Naive thymus-derived CD4-positive, alpha-beta T cell (primary cell): ENCODE measurements at regions of chr12 and their contacts with region 1.

Region 1: GRCh38 chr12:120437754-120438494 is at the start of gene COX6A1:
- DNase-seq: peak; percentile 77 to 99 (median 96)
- ATAC-seq: peak; percentile 96
- H3K4me3 ChIP-seq: peak within 1 kb of the TSS; percentile 63
- H3K4me3 Mint-ChIP-seq: peak within 1 kb of the TSS; percentile 87 to 100 (median 96)
- H3K27ac ChIP-seq: peak within 1 kb of the TSS; percentile 83
- H3K27ac Mint-ChIP-seq: peak within 1 kb of the TSS; percentile 88 to 97 (median 93)
- H3K4me1 ChIP-seq: peaks cover 15 to 20% of the 10 kb centered on the region in 2 donors
- H3K4me1 Mint-ChIP-seq: peaks cover 17 to 33% (median 30%) of the 10 kb centered on the region in 7 donors
- H3K27me3 ChIP-seq: no peaks in the 10 kb centered on the region
- H3K27me3 Mint-ChIP-seq: peaks cover 0 to 4% (median 2%) of the 10 kb centered on the region in 5 donors
- total RNA-seq, gene COX6A1: 118 to 270 (median 130) TPM

Region 2: DNA sequence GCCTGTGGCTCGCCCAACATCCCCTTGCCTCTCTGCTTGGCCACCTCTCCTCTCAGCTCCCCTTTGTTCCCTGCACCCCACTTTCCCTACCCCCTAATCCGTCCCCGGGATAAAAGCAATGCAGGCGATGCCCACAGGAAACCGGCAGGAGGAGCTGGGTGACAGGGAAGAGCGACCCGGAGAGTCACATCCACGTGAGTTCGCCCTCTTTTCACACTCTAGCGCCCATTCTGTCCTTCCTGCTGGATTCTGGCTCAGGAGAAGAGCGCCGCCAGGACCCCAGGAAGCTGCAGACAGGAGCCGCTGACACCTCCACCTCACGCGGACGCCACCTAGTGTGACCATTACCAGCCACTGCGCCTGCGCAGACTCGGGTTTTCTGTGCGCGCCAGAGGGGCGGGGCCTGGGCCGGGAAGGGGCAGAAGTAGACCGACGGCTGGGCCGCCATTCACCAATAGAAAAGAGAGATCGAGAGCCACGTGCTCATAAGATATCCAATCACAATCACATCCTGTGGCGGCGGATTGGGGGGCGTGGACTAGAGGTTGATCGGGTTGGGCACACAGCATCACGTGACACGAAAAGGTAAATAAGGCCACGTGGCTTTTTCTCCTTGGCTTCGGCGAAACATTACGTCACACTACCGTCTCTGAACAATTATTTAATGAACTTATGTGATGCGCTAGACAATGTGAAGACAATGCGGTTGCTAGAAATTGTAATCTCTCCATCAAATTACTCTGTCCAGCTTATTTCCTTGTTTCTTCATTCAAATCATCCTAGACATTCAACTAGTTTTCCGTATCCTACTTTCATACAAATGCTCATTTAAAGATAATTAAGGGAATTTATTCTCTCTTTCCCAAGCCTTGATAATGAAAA is 120.5 kb before region 1 on chr12:
- CTCF ChIA-PET with region 1: no interaction called
- POLR2A ChIA-PET with region 1: no interaction called
- intact Hi-C with region 1: loop called (anchors 1 kb)
- DNase-seq: peak; percentile 100
- ATAC-seq: peak; percentile 100
- H3K4me3 ChIP-seq: peak overlapping the region; percentile 81
- H3K4me3 Mint-ChIP-seq: peak overlapping the region; percentile 86 to 95 (median 93)
- H3K27ac ChIP-seq: peak overlapping the region; percentile 87
- H3K27ac Mint-ChIP-seq: peak overlapping the region; percentile 85 to 99 (median 98)
- H3K4me1 ChIP-seq: peaks cover 5 to 10% of the 10 kb centered on the region in 2 donors
- H3K4me1 Mint-ChIP-seq: peaks cover 4 to 16% (median 14%) of the 10 kb centered on the region in 7 donors
- H3K27me3 ChIP-seq: no peaks in the 10 kb centered on the region
- H3K27me3 Mint-ChIP-seq: peaks cover 0 to 4% (median 0%) of the 10 kb centered on the region in 5 donors

Region 3: DNA sequence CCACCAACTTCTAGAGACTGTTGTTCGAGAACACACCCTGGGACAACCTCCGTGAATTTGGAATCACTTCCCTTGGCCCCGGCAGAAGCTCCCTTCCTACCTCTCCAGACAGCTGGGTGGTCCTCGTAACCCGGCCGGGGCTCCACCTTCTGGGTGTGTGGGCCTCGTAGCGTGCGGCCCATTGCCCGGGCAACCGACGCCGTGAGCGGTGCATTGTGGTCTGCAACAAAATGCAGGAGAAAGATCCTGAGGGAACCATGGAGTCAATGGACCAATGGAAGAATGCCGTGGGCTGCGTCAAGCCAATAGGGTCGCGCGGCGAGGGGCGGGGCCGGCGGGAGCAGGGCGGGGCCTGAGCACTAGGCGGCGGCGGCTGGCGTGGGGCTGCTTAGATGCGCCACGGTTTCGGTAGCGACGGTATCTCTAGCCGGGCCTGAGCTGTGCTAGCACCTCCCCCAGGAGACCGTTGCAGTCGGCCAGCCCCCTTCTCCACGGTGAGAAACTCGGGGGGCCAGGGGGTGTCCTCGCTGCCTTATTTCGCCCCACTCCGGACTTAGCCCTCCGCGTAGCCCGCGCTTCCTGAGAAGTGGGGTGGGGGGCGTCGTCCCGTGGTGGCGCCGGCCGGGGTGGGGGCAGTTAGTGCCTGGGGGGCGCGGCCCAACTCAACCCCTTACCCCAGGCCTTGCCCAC is 57.9 kb after region 1 on chr12 and contains the start of gene DYNLL1:
- CTCF ChIA-PET with region 1: no interaction called
- POLR2A ChIA-PET with region 1: interaction called, 7 read pairs
- intact Hi-C with region 1: loop called (anchors 1 kb)
- DNase-seq: peak; percentile 95 to 99 (median 97)
- ATAC-seq: peak; percentile 99
- H3K4me3 ChIP-seq: peak within 1 kb of the TSS; percentile 82
- H3K4me3 Mint-ChIP-seq: peak within 1 kb of the TSS; percentile 83 to 98 (median 94)
- H3K27ac ChIP-seq: peak within 1 kb of the TSS; percentile 84
- H3K27ac Mint-ChIP-seq: peak within 1 kb of the TSS; percentile 58 to 94 (median 90)
- H3K4me1 ChIP-seq: peaks cover 9% of the 10 kb centered on the region in 2 donors
- H3K4me1 Mint-ChIP-seq: peaks cover 13 to 48% (median 33%) of the 10 kb centered on the region in 7 donors
- H3K27me3 ChIP-seq: no peaks in the 10 kb centered on the region
- H3K27me3 Mint-ChIP-seq: no peaks in the 10 kb centered on the region
- total RNA-seq, gene DYNLL1: 35.0 to 301 (median 72.7) TPM

Region 4: DNA sequence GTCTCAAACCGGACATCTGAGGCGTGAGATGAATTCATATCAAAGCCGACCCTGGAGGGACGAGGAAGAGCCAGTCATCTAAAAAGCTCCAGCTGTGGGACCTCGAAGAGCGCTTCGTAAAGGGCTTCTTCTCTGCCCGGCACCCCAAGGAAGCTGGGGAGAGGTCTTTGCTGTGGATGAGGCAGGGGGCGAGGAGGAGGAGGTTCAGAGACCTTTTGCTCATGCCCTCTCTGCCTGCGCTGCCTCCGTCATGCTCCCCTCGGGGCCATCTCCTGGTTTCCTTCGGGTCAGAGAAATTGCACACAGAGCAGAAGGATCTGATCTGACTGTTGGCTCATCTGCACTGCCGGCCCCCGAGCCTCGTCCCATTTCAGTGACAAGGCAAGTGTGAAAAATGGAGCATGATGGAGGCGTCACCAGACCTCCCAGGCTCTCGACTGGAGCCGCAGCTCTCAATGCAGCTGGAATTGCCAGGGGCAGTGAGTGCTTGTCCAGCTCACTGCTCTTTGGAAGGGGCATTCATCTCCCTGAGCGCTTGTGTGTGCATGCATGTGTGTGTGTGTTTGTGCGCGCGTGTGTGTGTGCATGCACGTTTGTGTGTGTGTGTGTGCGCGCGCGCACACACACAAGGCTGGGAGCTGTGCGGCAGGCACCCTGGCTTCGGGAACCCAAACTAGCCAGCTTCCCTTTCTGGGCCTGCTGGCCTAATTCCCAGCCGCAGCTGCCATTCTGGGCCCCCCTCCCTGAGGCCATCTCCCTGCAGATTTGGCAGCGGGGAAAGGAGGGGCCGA is 211.7 kb after region 1 on chr12:
- CTCF ChIA-PET with region 1: interaction called, 4 read pairs
- POLR2A ChIA-PET with region 1: no interaction called
- intact Hi-C with region 1: loop called in 1 of 2 experiments (anchors 1 kb)
- DNase-seq: no peak
- ATAC-seq: no peak
- H3K4me3 ChIP-seq: no peak overlapping the region
- H3K4me3 Mint-ChIP-seq: peak overlapping the region in 8 of 10 donors; percentile 31 to 78 (median 49)
- H3K27ac ChIP-seq: no peak overlapping the region
- H3K27ac Mint-ChIP-seq: no peak overlapping the region
- H3K4me1 ChIP-seq: peaks cover 6 to 7% of the 10 kb centered on the region in 2 donors
- H3K4me1 Mint-ChIP-seq: peaks cover 6 to 16% (median 13%) of the 10 kb centered on the region in 7 donors
- H3K27me3 ChIP-seq: peaks cover 3 to 5% of the 10 kb centered on the region in 2 donors
- H3K27me3 Mint-ChIP-seq: peaks cover 42 to 63% (median 58%) of the 10 kb centered on the region in 5 donors

Region 5: GRCh38 chr12:121015825-121016766 is 578.2 kb after region 1 on chr12 and contains the start of gene C12orf43:
- CTCF ChIA-PET with region 1: no interaction called
- POLR2A ChIA-PET with region 1: interaction called, 3 read pairs
- intact Hi-C with region 1: loop called in 1 of 2 experiments (anchors 2 kb)
- DNase-seq: peak; percentile 74 to 93 (median 89)
- ATAC-seq: peak; percentile 99
- H3K4me3 ChIP-seq: peak within 1 kb of the TSS; percentile 88
- H3K4me3 Mint-ChIP-seq: peak within 1 kb of the TSS; percentile 93 to 99 (median 96)
- H3K27ac ChIP-seq: peak within 1 kb of the TSS; percentile 88
- H3K27ac Mint-ChIP-seq: peak within 1 kb of the TSS; percentile 89 to 97 (median 95)
- H3K4me1 ChIP-seq: peaks cover 6 to 11% of the 10 kb centered on the region in 2 donors
- H3K4me1 Mint-ChIP-seq: peaks cover 17 to 32% (median 24%) of the 10 kb centered on the region in 7 donors
- H3K27me3 ChIP-seq: no peaks in the 10 kb centered on the region
- H3K27me3 Mint-ChIP-seq: no peaks in the 10 kb centered on the region
- total RNA-seq, gene C12orf43: 11.8 to 24.2 (median 17.5) TPM